ENCODE measurements at regions of chr7 and their contacts with region 1.

Region 1: DNA sequence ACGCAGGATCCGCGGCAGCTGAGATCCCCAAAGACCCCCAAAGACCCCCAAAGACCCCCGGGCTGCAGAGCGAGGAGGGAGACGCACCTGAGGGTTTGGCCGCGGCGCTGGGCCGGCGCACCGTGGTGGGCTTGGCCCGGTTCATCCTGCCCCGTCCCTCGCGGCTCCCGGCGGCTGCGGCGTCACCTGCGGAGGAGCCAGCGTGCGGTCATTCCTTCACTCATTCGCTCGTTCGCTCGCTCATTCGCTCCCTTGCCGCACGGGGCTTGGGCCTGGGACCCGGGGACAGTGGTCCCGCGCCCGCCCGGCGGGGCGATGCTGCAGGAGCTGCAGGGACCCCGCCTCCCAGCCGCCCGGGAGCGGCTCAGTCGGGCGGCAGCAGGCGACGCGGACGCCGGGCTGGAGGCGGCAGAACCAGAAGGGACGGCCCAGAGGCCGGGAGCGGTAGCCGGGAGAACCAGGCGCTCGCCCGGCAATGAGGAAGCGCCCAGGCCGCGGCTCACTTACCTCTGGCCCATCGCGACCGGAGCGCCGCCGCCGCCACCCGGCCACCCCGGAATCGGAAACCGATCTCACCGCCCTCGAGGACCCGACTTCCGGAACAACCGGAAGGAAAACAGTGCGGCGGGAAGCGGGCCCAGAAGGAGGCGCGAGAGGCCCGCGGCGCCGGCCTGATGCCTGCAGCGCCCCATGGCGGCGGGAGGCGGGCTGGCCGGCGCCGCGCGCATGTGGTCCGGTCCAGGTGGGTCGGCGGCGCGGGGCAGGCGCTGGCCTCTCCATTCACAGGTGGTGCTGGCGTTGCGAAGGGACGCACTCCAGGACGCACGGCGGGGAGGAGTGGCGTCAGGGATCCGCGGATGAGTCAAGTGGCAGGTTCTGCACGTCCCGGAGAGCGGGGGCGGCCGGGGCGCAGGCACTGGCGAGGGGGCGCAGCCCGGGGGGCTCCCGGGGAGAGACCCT is at the start of gene INTS1:
- DNase-seq: peak; percentile 85 to 90 (median 88)
- H3K4me3 ChIP-seq: peak within 1 kb of the TSS; percentile 63 to 97 (median 76)
- H3K27ac ChIP-seq: peak within 1 kb of the TSS in 1 of 2 experiments; percentile 64
- H3K4me1 ChIP-seq: peaks cover 0 to 50% (median 46%) of the 10 kb centered on the region in 4 experiments
- H3K27me3 ChIP-seq: no peaks in the 10 kb centered on the region

Region 2: GRCh38 chr7:1526251-1526763 is 22.2 kb after region 1 on chr7:
- CTCF ChIA-PET with region 1: interaction called, 150 read pairs
- POLR2A ChIA-PET with region 1: interaction called, 6 read pairs
- DNase-seq: no peak
- H3K4me3 ChIP-seq: no peak overlapping the region
- H3K27ac ChIP-seq: no peak overlapping the region
- H3K4me1 ChIP-seq: peaks cover 0 to 26% (median 18%) of the 10 kb centered on the region in 4 experiments
- H3K27me3 ChIP-seq: no peaks in the 10 kb centered on the region

Region 3: DNA sequence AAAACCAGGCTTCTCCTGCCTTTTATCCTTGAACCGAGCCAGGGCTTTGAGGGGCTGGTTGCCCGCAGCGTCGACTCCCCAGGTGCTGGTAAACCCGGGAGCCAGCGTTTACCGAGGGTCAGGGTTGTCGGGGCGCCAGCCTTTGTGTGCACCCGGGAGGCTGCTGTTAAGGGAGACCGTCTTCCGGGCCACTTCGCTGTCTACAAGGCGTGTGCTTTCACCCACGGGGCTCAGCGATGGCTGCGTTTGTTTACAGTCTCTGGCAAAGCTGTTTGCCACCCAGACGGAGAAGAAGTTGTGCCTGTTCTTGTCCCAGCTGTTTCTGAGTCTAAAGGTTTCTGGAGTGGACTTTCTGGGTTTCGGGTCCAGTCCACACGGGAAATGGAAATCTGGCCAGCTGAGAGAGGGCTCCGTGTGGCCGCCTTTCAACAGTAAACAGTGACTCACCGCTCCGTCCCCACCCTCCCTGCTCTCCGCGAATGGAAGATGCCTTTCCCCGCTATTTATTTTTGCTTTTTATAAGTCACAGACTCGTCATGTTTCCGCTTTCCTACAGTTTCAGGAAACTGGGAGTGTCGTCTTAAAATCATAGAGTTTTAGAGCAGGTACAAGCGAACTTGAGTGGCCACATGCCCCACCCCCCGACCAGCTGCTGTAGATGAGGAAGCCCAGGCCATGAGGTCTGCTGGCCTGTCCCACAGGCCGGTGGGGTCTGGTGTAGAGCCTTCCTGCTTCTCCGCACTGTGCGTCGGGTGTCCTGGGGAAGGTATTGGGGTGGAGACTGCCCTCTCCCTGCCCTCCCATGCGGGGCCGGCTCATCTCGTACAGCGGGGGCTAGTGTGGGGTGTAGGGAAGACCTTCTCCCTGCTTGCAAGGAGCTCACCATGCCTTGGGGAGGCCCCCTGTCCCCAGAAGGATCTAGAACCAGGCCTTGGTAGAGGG is 28.7 kb after region 1 on chr7:
- CTCF ChIA-PET with region 1: interaction called, 150 read pairs
- POLR2A ChIA-PET with region 1: interaction called, 9 read pairs
- DNase-seq: peak; percentile 64 to 89 (median 85)
- H3K4me3 ChIP-seq: peak overlapping the region; percentile 64 to 96 (median 81)
- H3K27ac ChIP-seq: peak overlapping the region; percentile 58 to 87
- H3K4me1 ChIP-seq: peaks cover 2 to 58% (median 48%) of the 10 kb centered on the region in 4 experiments
- H3K27me3 ChIP-seq: no peaks in the 10 kb centered on the region

Region 4: GRCh38 chr7:1555809-1556540 is 51.9 kb after region 1 on chr7 and contains the start of gene TMEM184A:
- CTCF ChIA-PET with region 1: interaction called, 14 read pairs
- POLR2A ChIA-PET with region 1: no interaction called
- DNase-seq: peak; percentile 47 to 72 (median 67)
- H3K4me3 ChIP-seq: no peak within 1 kb of the TSS
- H3K27ac ChIP-seq: no peak within 1 kb of the TSS
- H3K4me1 ChIP-seq: peaks cover 0 to 19% (median 14%) of the 10 kb centered on the region in 4 experiments
- H3K27me3 ChIP-seq: no peaks in the 10 kb centered on the region

Region 5: GRCh38 chr7:1638215-1638661 is 134.1 kb after region 1 on chr7:
- CTCF ChIA-PET with region 1: no interaction called
- POLR2A ChIA-PET with region 1: no interaction called
- DNase-seq: no peak
- H3K4me3 ChIP-seq: no peak overlapping the region
- H3K27ac ChIP-seq: no peak overlapping the region
- H3K4me1 ChIP-seq: peaks cover 0 to 2% (median 0%) of the 10 kb centered on the region in 4 experiments
- H3K27me3 ChIP-seq: peaks cover 0 to 8% (median 0%) of the 10 kb centered on the region in 5 experiments

Region 6: DNA sequence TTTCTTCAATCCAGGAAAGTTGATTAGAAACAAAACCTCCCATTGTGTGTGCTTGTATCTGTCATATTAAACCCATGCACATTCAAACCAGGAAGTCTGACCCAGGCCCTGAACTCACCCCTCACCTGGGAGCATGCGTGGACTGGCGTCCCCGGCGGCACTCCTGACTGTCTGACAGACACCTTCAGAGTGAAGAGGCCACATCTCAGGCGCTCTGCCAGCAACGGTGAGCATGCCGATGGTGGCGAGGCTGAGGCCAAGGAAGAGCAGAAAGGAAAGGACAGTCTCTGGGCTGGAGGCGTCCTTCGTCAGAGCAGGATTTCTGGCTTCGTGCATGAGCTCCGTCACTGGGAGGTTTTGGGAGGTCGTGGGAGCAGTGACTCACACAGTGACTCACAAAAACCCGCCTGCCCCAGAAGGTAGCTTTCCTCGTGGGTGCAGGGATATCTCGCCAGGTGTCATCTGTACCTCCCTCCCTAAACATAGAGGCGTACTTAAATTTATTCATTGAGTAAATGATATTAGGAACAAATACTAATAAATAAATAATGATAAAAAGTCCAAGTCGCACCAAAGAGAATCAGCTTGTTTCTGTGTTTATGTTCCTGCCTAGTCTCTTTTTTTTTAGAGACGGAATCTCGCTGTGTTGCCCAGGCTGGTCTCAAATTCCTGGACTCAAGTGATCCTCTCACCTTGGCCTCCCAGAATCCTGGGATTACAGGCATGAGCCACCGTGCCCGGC is 1068.2 kb after region 1 on chr7:
- CTCF ChIA-PET with region 1: no interaction called
- POLR2A ChIA-PET with region 1: no interaction called
- DNase-seq: no peak
- H3K4me3 ChIP-seq: no peak overlapping the region
- H3K27ac ChIP-seq: no peak overlapping the region
- H3K4me1 ChIP-seq: peaks cover 3 to 13% (median 9%) of the 10 kb centered on the region in 4 experiments
- H3K27me3 ChIP-seq: no peaks in the 10 kb centered on the region

Measured in common myeloid progenitor, CD34-positive (primary cell).